ENCODE measurements at regions of chr18 and their contacts with region 1.

Region 1: DNA sequence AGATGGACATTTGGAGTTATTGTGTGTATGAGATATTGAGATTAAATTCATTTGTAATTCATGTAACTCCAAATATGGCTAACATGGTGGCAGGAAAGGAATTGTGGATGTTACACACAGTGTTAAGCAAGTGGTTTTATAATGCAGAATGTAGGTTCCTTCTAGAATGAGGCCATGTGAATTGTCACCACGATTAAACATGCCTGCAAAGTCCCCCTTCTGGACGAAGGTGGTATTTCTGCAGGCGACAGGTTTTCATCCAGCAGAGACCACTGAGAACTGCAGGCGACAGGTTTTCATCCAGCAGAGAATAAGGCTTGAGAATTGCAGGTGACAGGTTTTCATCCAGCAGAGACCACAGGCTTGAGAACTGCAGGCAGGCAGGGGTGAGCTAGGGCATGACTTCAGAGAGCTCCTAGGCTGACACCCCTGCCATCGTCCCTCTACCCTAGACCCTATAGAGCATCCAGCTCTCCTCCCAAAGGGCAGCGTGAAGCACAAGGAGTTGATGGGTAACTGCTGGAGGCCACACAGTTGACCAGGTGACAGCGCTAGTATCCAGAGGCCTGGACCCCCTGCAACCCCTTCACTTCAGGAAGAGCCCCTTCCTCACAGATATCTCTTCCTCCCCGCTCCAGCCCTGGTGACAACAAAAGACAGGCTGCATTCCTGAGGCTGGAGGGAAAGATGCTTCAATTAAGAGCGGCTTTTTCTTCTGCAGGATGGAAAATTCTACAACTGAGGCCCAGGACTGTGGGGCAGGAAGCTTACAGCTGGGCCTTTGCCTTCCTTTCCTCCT is 175.8 kb downstream of the LOXHD1 start:
- DNase-seq: peak in 1 of 2 experiments; percentile 87
- H3K4me3 ChIP-seq: no peak overlapping the region
- H3K27ac ChIP-seq: no peak overlapping the region
- H3K4me1 ChIP-seq: peaks cover 5 to 15% (median 10%) of the 10 kb centered on the region in 4 experiments; a peak in 6 of 7 replicates
- H3K27me3 ChIP-seq: 0 out of 7 replicates have a peak, but pooled peaks cover 0 to 3% (median 0%) of the 10 kb centered on the region in 4 experiments
- CTCF ChIP-seq: peak; percentile 53 to 84 (median 83)
- EP300 ChIP-seq: no peak
- POLR2A ChIP-seq: no peak
- RAD21 ChIP-seq: peak; percentile 62 to 80

Region 2: DNA sequence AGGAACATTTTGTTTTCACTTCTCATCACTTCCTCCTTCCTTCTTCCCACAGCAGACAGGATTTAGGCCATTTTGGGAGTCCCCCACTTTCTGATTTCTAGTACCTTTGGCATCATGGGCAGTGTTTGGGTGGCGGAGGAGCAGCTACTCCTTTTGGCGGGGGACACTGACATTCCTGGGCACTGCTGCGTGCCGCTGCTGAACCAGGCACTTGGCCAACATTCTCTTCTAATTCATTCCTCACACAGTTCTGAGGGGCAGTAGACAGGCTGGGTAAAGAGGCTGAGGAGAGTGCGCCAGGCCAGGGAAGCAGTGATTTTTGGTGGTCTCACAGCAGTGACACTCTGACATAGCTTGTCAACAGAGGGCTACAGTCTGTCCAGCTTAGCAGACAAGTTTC is 94.5 kb before region 1 on chr18:
- CTCF ChIA-PET with region 1: interaction called, 56 read pairs
- POLR2A ChIA-PET with region 1: no interaction called
- DNase-seq: no peak
- H3K4me3 ChIP-seq: no peak overlapping the region
- H3K27ac ChIP-seq: no peak overlapping the region
- H3K4me1 ChIP-seq: no peaks in the 10 kb centered on the region
- H3K27me3 ChIP-seq: no peaks in the 10 kb centered on the region
- CTCF ChIP-seq: no peak
- EP300 ChIP-seq: no peak
- POLR2A ChIP-seq: no peak
- RAD21 ChIP-seq: no peak

Region 3: GRCh38 chr18:46433121-46433826 is 48.0 kb before region 1 on chr18:
- CTCF ChIA-PET with region 1: interaction called, 15 read pairs
- POLR2A ChIA-PET with region 1: no interaction called
- DNase-seq: peak; percentile 46 to 94
- H3K4me3 ChIP-seq: peak overlapping the region in 3 of 4 experiments; percentile 17 to 49 (median 49); a peak in 5 of 8 replicates
- H3K27ac ChIP-seq: no peak overlapping the region
- H3K4me1 ChIP-seq: peaks cover 0 to 17% (median 9%) of the 10 kb centered on the region in 4 experiments; a peak in 6 of 7 replicates
- H3K27me3 ChIP-seq: no peaks in the 10 kb centered on the region
- CTCF ChIP-seq: no peak
- EP300 ChIP-seq: no peak
- POLR2A ChIP-seq: no peak
- RAD21 ChIP-seq: peak in 1 of 2 experiments; percentile 0; a peak in 1 of 4 replicates

Region 4: GRCh38 chr18:46469186-46469915 is 11.9 kb before region 1 on chr18:
- CTCF ChIA-PET with region 1: interaction called, 136 read pairs
- POLR2A ChIA-PET with region 1: interaction called, 3 read pairs
- DNase-seq: no peak
- H3K4me3 ChIP-seq: no peak overlapping the region
- H3K27ac ChIP-seq: no peak overlapping the region
- H3K4me1 ChIP-seq: peaks cover 5 to 11% (median 6%) of the 10 kb centered on the region in 4 experiments; a peak in 4 of 7 replicates
- H3K27me3 ChIP-seq: peaks cover 0 to 1% (median 0%) of the 10 kb centered on the region in 4 experiments; a peak in 1 of 7 replicates
- CTCF ChIP-seq: no peak
- EP300 ChIP-seq: no peak
- POLR2A ChIP-seq: no peak
- RAD21 ChIP-seq: no peak

Region 5: DNA sequence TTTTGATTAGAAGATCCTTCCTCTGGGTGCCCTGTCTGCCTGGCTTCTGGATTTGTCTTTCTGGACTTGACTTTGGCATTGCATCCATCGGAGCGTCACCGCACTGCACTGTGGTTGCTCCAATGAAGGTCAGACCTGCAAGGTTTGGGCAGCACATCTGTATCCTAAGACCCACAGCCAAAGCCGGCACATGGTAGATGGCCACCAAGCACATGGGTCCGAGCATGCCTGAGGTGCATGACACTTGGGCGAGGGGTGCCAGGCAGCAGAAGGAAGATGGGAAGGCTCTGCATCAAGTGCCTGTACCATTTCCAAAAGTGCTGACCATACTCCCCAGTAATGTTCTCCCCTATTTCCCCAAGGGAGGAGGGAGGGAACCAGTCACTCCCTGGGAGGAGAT is 25.7 kb after region 1 on chr18:
- CTCF ChIA-PET with region 1: interaction called, 21 read pairs
- POLR2A ChIA-PET with region 1: no interaction called
- DNase-seq: no peak
- H3K4me3 ChIP-seq: no peak overlapping the region
- H3K27ac ChIP-seq: no peak overlapping the region
- H3K4me1 ChIP-seq: no peaks in the 10 kb centered on the region
- H3K27me3 ChIP-seq: no peaks in the 10 kb centered on the region; a peak in 1 of 7 replicates
- CTCF ChIP-seq: no peak
- EP300 ChIP-seq: no peak
- POLR2A ChIP-seq: no peak
- RAD21 ChIP-seq: no peak; a peak in 1 of 4 replicates